ENCODE measurements at regions of chr16 and their contacts with region 1.

Region 1: DNA sequence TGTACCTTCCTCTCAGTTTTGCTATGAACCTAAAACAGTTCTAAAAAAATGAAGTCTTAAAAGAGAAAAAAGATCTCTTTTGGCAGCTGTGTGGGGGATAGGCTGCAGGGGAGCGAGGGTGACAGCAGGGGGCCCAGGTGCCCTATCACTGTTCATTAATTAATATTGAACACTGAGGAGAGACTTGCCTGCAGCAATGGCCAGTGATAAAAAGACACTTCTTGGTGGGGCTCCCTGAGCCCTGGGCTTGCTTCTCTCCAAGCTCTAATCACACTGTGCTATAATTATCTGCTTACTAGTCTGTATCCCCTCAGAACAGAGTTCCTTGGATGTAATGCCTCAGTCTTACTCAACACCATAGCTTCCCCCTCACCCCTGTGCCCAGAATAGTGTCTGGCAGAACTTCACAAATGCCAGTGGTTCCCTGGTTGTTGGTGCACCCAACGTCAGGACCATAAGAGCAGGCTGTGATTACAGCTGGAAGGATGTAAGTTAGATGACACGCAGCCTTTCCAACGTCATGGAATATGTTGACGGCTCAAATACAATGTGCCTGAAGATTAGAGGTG is 52.0 kb upstream of the IRX6 start:
- DNase-seq: peak; percentile 25 to 65
- ATAC-seq: peak; percentile 93 to 96
- H3K4me3 ChIP-seq: no peak overlapping the region
- H3K27ac ChIP-seq: peak overlapping the region in 3 of 4 donors; percentile 18 to 70 (median 69)
- H3K4me1 ChIP-seq: peaks cover 7 to 12% of the 10 kb centered on the region in 2 donors
- H3K27me3 ChIP-seq: no peaks in the 10 kb centered on the region
- CTCF ChIP-seq: no peak
- POLR2A ChIP-seq: peak; percentile 24 to 62

Region 2: GRCh38 chr16:55294931-55295342 is 22.9 kb after region 1 on chr16:
- in situ Hi-C with region 1: no loop called
- intact Hi-C with region 1: loop called (anchors 1 kb)
- DNase-seq: peak; percentile 27
- ATAC-seq: peak; percentile 45 to 61
- H3K4me3 ChIP-seq: no peak overlapping the region
- H3K27ac ChIP-seq: peak overlapping the region; percentile 29 to 70 (median 36)
- H3K4me1 ChIP-seq: peaks cover 4 to 7% of the 10 kb centered on the region in 2 donors
- H3K27me3 ChIP-seq: no peaks in the 10 kb centered on the region
- CTCF ChIP-seq: no peak
- POLR2A ChIP-seq: no peak

Measured in gastrocnemius medialis (tissue), 4 donors.